PC-3 (cell line): ENCODE measurements at regions of chr9 and their contacts with region 1.

Region 1: GRCh38 chr9:69919461-69920061 is 98.9 kb downstream of the CFAP95 start:
- DNase-seq: peak; percentile 63
- ATAC-seq: peak; percentile 76
- H3K4me3 ChIP-seq: no peak overlapping the region
- H3K27ac ChIP-seq: no peak overlapping the region
- H3K4me1 ChIP-seq: peaks cover 15% of the 10 kb centered on the region
- H3K27me3 ChIP-seq: no peaks in the 10 kb centered on the region
- CTCF ChIP-seq: peak; percentile 81

Region 2: GRCh38 chr9:69421908-69422801 is 497.4 kb before region 1 on chr9:
- CTCF ChIA-PET with region 1: no interaction called
- POLR2A ChIA-PET with region 1: no interaction called
- intact Hi-C with region 1: loop called (anchors 2 kb)
- DNase-seq: peak; percentile 64
- ATAC-seq: peak; percentile 42
- H3K4me3 ChIP-seq: no peak overlapping the region
- H3K27ac ChIP-seq: no peak overlapping the region
- H3K4me1 ChIP-seq: no peaks in the 10 kb centered on the region
- H3K27me3 ChIP-seq: 0 out of 2 replicates have a peak, but pooled peaks cover 3% of the 10 kb centered on the region
- CTCF ChIP-seq: peak; percentile 71

Region 3: GRCh38 chr9:69759421-69760277 is 159.9 kb before region 1 on chr9 and contains the start of gene PTAR1:
- CTCF ChIA-PET with region 1: no interaction called
- POLR2A ChIA-PET with region 1: no interaction called
- intact Hi-C with region 1: loop called (anchors 10 kb)
- DNase-seq: peak; percentile 82
- ATAC-seq: peak; percentile 82
- H3K4me3 ChIP-seq: peak within 1 kb of the TSS; percentile 99
- H3K27ac ChIP-seq: peak within 1 kb of the TSS; percentile 43; the same call in 1 of the 2 replicates
- H3K4me1 ChIP-seq: peaks cover 6% of the 10 kb centered on the region; the same call in 1 of the 2 replicates
- H3K27me3 ChIP-seq: no peaks in the 10 kb centered on the region
- CTCF ChIP-seq: no peak
- total RNA-seq, gene PTAR1: 20.0 and 22.9 TPM in 2 replicates

Region 4: GRCh38 chr9:69809304-69809863 is 110.2 kb before region 1 on chr9:
- CTCF ChIA-PET with region 1: no interaction called
- POLR2A ChIA-PET with region 1: no interaction called
- intact Hi-C with region 1: loop called (anchors 5 kb)
- DNase-seq: peak; percentile 37
- ATAC-seq: no peak
- H3K4me3 ChIP-seq: no peak overlapping the region
- H3K27ac ChIP-seq: no peak overlapping the region
- H3K4me1 ChIP-seq: no peaks in the 10 kb centered on the region
- H3K27me3 ChIP-seq: no peaks in the 10 kb centered on the region
- CTCF ChIP-seq: peak; percentile 59

Region 5: DNA sequence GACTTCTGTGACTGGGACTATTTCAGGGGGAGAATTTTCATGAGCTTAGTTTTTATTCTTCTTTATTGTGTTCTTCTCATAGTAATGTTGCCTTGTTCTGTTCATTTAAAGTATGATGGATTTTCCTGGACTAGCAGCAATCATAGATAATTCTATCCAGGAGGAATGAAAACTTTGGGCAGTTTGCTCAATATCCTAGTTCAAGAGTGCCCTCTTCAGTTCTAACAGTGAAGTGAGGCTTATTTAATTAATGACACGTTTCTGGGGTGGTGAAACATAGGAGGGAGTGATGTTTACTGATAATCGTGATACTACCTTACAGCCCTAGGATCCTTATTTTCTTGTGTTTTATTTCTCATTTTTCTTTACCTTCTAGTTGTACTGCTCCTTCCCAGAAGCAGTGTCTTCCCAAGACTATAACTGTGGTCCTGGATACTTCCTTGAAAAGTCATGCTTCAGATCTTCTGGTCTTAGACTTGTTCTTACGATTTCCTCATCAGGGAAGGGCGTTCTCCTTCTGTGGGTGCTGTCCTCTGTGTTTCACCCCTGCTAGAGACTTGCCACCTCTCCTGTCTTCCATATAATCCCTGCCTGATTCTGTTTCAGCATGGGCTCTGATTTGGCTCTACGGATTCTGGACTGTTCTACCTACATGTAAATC is 41.6 kb before region 1 on chr9:
- CTCF ChIA-PET with region 1: no interaction called
- POLR2A ChIA-PET with region 1: no interaction called
- intact Hi-C with region 1: loop called (anchors 1 kb)
- DNase-seq: peak; percentile 58
- ATAC-seq: peak; percentile 63
- H3K4me3 ChIP-seq: no peak overlapping the region
- H3K27ac ChIP-seq: no peak overlapping the region
- H3K4me1 ChIP-seq: no peaks in the 10 kb centered on the region
- H3K27me3 ChIP-seq: no peaks in the 10 kb centered on the region
- CTCF ChIP-seq: peak; percentile 71

Region 6: DNA sequence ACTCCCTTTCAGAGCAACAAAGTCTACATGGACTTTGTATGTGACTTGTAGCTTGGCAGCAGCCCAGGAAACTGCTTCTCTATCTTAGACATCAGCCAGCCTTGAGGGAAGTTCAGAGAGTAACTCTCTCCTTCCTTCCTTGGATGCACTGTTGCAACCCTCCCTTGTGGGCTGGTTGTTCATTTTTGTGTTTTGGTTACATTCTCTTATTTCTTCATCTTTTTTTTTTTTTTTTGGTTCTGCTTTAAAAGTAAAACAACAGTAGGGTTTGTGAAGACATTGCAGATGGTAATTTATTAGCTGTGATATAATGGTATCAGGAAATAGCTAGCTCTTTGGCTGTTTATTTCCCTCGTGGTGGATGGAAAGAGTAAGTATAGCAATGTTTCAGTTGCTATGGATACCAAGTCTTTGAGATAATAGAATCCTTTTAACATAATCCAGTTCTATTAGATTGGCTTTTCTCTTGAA is 26.1 kb after region 1 on chr9:
- CTCF ChIA-PET with region 1: interaction called, 12 read pairs
- POLR2A ChIA-PET with region 1: no interaction called
- intact Hi-C with region 1: no loop called
- DNase-seq: no peak
- ATAC-seq: no peak
- H3K4me3 ChIP-seq: no peak overlapping the region
- H3K27ac ChIP-seq: no peak overlapping the region
- H3K4me1 ChIP-seq: peaks cover 19% of the 10 kb centered on the region
- H3K27me3 ChIP-seq: no peaks in the 10 kb centered on the region
- CTCF ChIP-seq: no peak

Region 7: GRCh38 chr9:70177121-70177520 is 257.6 kb after region 1 on chr9:
- CTCF ChIA-PET with region 1: no interaction called
- POLR2A ChIA-PET with region 1: no interaction called
- intact Hi-C with region 1: no loop called
- DNase-seq: no peak
- ATAC-seq: no peak
- H3K4me3 ChIP-seq: no peak overlapping the region
- H3K27ac ChIP-seq: no peak overlapping the region
- H3K4me1 ChIP-seq: no peaks in the 10 kb centered on the region
- H3K27me3 ChIP-seq: no peaks in the 10 kb centered on the region
- CTCF ChIP-seq: no peak